CD8-positive, alpha-beta T cell (primary cell): ENCODE measurements at regions of chr2 and their contacts with region 1.

Region 1: DNA sequence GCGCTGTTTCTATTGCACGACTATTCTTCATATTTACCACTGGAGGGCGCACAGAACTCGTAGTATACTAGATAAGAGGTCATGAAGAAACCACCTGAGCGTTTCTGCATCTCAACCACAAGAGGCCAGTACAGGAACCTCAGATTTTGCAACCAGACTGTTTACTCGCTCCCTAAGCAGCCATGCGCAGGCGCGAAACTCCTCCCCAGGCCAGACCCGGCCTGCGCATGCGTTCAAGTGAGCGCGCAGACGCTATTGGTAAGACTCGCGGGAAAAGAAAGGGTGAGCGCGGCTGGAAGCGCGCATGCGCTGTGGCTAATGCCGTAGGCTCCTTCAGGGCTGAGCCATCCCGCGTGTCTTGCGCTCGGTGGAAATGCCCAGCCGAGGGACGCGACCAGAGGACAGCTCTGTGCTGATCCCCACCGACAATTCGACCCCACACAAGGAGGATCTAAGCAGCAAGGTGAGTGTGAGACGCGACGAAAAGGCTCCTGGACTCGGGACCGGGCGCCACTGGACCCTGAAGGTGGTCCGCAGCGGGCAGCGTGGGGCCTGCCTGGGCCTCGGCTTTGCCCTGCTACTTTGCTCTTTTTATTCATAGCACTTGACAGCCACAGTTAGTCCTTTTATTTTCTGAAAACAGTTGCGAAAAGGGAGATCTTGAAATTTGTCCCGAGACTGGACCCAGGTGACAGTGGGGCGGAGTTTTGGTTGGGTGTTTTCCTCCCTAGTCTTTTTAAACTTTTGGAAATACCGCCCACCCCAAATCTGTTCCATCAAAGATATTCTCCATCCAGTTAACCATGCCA is at the start of gene ASNSD1:
- DNase-seq: peak; percentile 97 to 100 (median 99)
- ATAC-seq: peak; percentile 89
- H3K4me3 ChIP-seq: peak within 1 kb of the TSS; percentile 79 to 88
- H3K4me3 Mint-ChIP-seq: no peak within 1 kb of the TSS
- H3K27ac ChIP-seq: peak within 1 kb of the TSS; percentile 87 to 91
- H3K27ac Mint-ChIP-seq: no peak within 1 kb of the TSS
- H3K4me1 ChIP-seq: peaks cover 47% of the 10 kb centered on the region
- H3K4me1 Mint-ChIP-seq: peaks cover 61% of the 10 kb centered on the region
- H3K27me3 ChIP-seq: no peaks in the 10 kb centered on the region
- H3K27me3 Mint-ChIP-seq: no peaks in the 10 kb centered on the region
- CTCF ChIP-seq: peak; percentile 92
- total RNA-seq, gene ASNSD1: 62.7 to 69.4 TPM

Region 2: GRCh38 chr2:189674374-189675112 is 13.2 kb after region 1 on chr2 and contains the start of gene ANKAR:
- CTCF ChIA-PET with region 1: interaction called, 94 read pairs
- POLR2A ChIA-PET with region 1: interaction called, 47 read pairs
- intact Hi-C with region 1: loop called (anchors 1 kb)
- DNase-seq: peak; percentile 64 to 91 (median 79)
- ATAC-seq: peak; percentile 91
- H3K4me3 ChIP-seq: peak within 1 kb of the TSS; percentile 81 to 88
- H3K4me3 Mint-ChIP-seq: peak within 1 kb of the TSS; percentile 91
- H3K27ac ChIP-seq: peak within 1 kb of the TSS; percentile 86 to 97
- H3K27ac Mint-ChIP-seq: peak within 1 kb of the TSS; percentile 99
- H3K4me1 ChIP-seq: peaks cover 11% of the 10 kb centered on the region
- H3K4me1 Mint-ChIP-seq: peaks cover 49% of the 10 kb centered on the region
- H3K27me3 ChIP-seq: no peaks in the 10 kb centered on the region
- H3K27me3 Mint-ChIP-seq: no peaks in the 10 kb centered on the region
- CTCF ChIP-seq: peak; percentile 72
- total RNA-seq, gene ANKAR: 7.3 to 9.2 TPM

Region 3: DNA sequence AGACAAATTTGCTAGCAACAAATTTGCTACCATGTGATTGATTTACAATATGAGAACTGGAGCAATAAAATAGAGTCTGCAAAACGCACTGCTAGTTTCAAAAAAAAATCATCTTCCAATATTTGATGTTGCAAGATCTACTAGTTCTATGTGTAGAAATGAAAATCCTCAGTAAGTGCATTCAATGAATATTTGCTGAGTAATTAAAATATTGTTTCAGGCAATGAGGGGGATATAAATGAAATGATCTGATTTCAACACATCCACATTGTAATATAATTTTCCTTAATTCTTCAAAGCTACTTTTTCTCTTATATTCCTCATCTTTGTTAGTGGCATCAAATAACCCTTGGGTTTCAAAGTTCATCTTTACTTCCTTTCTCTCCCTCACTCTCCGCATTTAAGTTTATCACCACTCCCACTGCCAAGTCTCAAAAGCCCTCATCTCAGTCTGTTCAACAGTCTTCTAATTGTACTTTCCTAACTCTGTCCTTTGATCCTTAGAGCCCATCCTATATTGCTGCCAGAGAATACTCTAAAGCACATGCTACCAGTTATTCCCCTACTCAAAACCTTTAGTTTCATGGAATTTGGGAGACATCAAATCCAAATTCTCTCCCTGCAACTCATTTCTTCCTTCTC is 95.1 kb after region 1 on chr2:
- CTCF ChIA-PET with region 1: interaction called, 7 read pairs
- POLR2A ChIA-PET with region 1: interaction called, 5 read pairs
- intact Hi-C with region 1: loop called in 1 of 2 experiments (anchors 5 kb)
- DNase-seq: no peak
- ATAC-seq: no peak
- H3K4me3 ChIP-seq: no peak overlapping the region
- H3K4me3 Mint-ChIP-seq: no peak overlapping the region
- H3K27ac ChIP-seq: no peak overlapping the region
- H3K27ac Mint-ChIP-seq: no peak overlapping the region
- H3K4me1 ChIP-seq: no peaks in the 10 kb centered on the region
- H3K4me1 Mint-ChIP-seq: peaks cover 5% of the 10 kb centered on the region
- H3K27me3 ChIP-seq: no peaks in the 10 kb centered on the region
- H3K27me3 Mint-ChIP-seq: no peaks in the 10 kb centered on the region
- CTCF ChIP-seq: no peak

Region 4: GRCh38 chr2:190069936-190070696 is 408.8 kb after region 1 on chr2:
- CTCF ChIA-PET with region 1: no interaction called
- POLR2A ChIA-PET with region 1: no interaction called
- intact Hi-C with region 1: loop called (anchors 1 to 2 kb)
- DNase-seq: peak in 3 of 9 experiments; percentile 14 to 61 (median 56)
- ATAC-seq: peak; percentile 75
- H3K4me3 ChIP-seq: no peak overlapping the region
- H3K4me3 Mint-ChIP-seq: no peak overlapping the region
- H3K27ac ChIP-seq: no peak overlapping the region
- H3K27ac Mint-ChIP-seq: no peak overlapping the region
- H3K4me1 ChIP-seq: no peaks in the 10 kb centered on the region
- H3K4me1 Mint-ChIP-seq: no peaks in the 10 kb centered on the region
- H3K27me3 ChIP-seq: no peaks in the 10 kb centered on the region
- H3K27me3 Mint-ChIP-seq: peaks cover 2% of the 10 kb centered on the region
- CTCF ChIP-seq: peak; percentile 53

Region 5: GRCh38 chr2:190376591-190377245 is 715.4 kb after region 1 on chr2:
- CTCF ChIA-PET with region 1: interaction called, 4 read pairs
- POLR2A ChIA-PET with region 1: no interaction called
- intact Hi-C with region 1: loop called (anchors 1 kb)
- DNase-seq: no peak
- ATAC-seq: no peak
- H3K4me3 ChIP-seq: no peak overlapping the region
- H3K4me3 Mint-ChIP-seq: no peak overlapping the region
- H3K27ac ChIP-seq: no peak overlapping the region
- H3K27ac Mint-ChIP-seq: no peak overlapping the region
- H3K4me1 ChIP-seq: no peaks in the 10 kb centered on the region
- H3K4me1 Mint-ChIP-seq: no peaks in the 10 kb centered on the region
- H3K27me3 ChIP-seq: peaks cover 0 to 2% of the 10 kb centered on the region in 2 experiments
- H3K27me3 Mint-ChIP-seq: no peaks in the 10 kb centered on the region
- CTCF ChIP-seq: no peak